Natural killer cell (primary cell): ENCODE measurements at regions of chr21 and their contacts with region 1.

Region 1: GRCh38 chr21:34202553-34203372 is 129.4 kb downstream of the MRPS6 start:
- DNase-seq: no peak
- ATAC-seq: peak in 1 of 3 donors; percentile 32
- H3K4me3 ChIP-seq: peak overlapping the region; percentile 31
- H3K4me3 Mint-ChIP-seq: peak overlapping the region; percentile 92
- H3K27ac ChIP-seq: no peak overlapping the region
- H3K27ac Mint-ChIP-seq: peak overlapping the region in 1 of 2 donors; percentile 85
- H3K4me1 ChIP-seq: peaks cover 45% of the 10 kb centered on the region
- H3K4me1 Mint-ChIP-seq: peaks cover 42 to 49% of the 10 kb centered on the region in 2 donors
- H3K27me3 ChIP-seq: peaks cover 2% of the 10 kb centered on the region
- H3K27me3 Mint-ChIP-seq: peaks cover 0 to 2% of the 10 kb centered on the region in 2 donors
- CTCF ChIP-seq: no peak

Region 2: GRCh38 chr21:33109574-33110339 is 1093.0 kb before region 1 on chr21:
- intact Hi-C with region 1: no loop called
- DNase-seq: peak in 1 of 2 donors; percentile 25
- ATAC-seq: no peak
- H3K4me3 ChIP-seq: no peak overlapping the region
- H3K4me3 Mint-ChIP-seq: no peak overlapping the region
- H3K27ac ChIP-seq: no peak overlapping the region
- H3K27ac Mint-ChIP-seq: no peak overlapping the region
- H3K4me1 ChIP-seq: peaks cover 3% of the 10 kb centered on the region
- H3K4me1 Mint-ChIP-seq: peaks cover 0 to 5% of the 10 kb centered on the region in 2 donors
- H3K27me3 ChIP-seq: peaks cover 22% of the 10 kb centered on the region
- H3K27me3 Mint-ChIP-seq: peaks cover 59 to 87% of the 10 kb centered on the region in 2 donors
- CTCF ChIP-seq: no peak

Region 3: GRCh38 chr21:33229784-33230544 is 972.8 kb before region 1 on chr21 and contains the start of gene IFNAR2:
- intact Hi-C with region 1: no loop called
- DNase-seq: peak; percentile 75 to 84
- ATAC-seq: peak; percentile 75 to 91 (median 82)
- H3K4me3 ChIP-seq: peak within 1 kb of the TSS; percentile 94
- H3K4me3 Mint-ChIP-seq: peak within 1 kb of the TSS; percentile 90
- H3K27ac ChIP-seq: peak within 1 kb of the TSS; percentile 68
- H3K27ac Mint-ChIP-seq: peak within 1 kb of the TSS; percentile 88 to 97
- H3K4me1 ChIP-seq: peaks cover 25% of the 10 kb centered on the region
- H3K4me1 Mint-ChIP-seq: peaks cover 51 to 52% of the 10 kb centered on the region in 2 donors
- H3K27me3 ChIP-seq: no peaks in the 10 kb centered on the region
- H3K27me3 Mint-ChIP-seq: no peaks in the 10 kb centered on the region
- CTCF ChIP-seq: no peak
- total RNA-seq, gene IFNAR2: 65.4 to 105 (median 70.9) TPM

Region 4: GRCh38 chr21:34078915-34079314 is 123.8 kb before region 1 on chr21:
- intact Hi-C with region 1: loop called (anchors 5 kb)
- DNase-seq: peak in 1 of 2 donors; percentile 51
- ATAC-seq: peak; percentile 40 to 62 (median 44)
- H3K4me3 ChIP-seq: no peak overlapping the region
- H3K4me3 Mint-ChIP-seq: peak overlapping the region; percentile 80
- H3K27ac ChIP-seq: no peak overlapping the region
- H3K27ac Mint-ChIP-seq: peak overlapping the region; percentile 54 to 89
- H3K4me1 ChIP-seq: peaks cover 26% of the 10 kb centered on the region
- H3K4me1 Mint-ChIP-seq: peaks cover 94% of the 10 kb centered on the region in 2 donors
- H3K27me3 ChIP-seq: no peaks in the 10 kb centered on the region
- H3K27me3 Mint-ChIP-seq: no peaks in the 10 kb centered on the region
- CTCF ChIP-seq: no peak

Region 5: DNA sequence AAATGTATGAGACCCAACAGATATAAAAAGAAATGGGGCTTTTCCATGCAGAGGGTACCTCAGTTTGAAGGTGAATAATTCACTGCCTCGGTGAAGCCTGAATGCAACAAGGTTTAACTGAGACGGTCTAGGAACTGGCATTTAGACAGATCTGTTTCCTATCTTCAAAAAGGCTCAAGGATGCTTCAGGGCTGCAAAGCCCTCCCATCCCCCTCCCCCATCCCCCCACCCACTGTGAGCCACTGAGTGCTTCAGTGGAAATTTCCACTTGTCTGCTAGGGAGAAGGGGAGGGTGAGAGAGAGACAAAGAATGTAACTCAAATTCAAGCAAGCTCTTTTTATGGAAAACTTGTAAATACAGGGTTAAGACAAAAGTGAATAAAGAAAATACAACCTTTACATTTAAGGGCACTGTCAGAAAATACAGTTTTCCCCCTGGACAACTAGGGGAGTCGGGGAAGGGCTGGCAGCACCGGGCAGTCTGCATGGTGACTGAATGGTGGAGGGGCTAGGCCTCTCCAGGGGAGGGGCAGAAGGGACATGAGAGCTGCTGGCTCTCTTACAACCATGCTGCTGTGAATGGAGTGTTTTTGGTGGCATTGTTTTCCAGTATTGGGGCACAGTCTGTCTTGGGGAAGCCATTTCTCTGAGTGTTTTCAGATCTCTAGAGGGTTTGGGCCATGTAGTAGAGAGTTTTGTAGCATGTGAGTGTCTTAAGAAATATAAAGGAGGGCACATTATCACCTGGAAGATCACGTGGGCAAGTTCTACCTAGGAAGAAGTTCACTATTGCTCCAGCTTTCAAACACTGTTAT is 72.7 kb before region 1 on chr21:
- intact Hi-C with region 1: loop called (anchors 10 kb)
- DNase-seq: no peak
- ATAC-seq: no peak
- H3K4me3 ChIP-seq: no peak overlapping the region
- H3K4me3 Mint-ChIP-seq: peak overlapping the region; percentile 18
- H3K27ac ChIP-seq: no peak overlapping the region
- H3K27ac Mint-ChIP-seq: peak overlapping the region; percentile 73 to 83
- H3K4me1 ChIP-seq: peaks cover 35% of the 10 kb centered on the region
- H3K4me1 Mint-ChIP-seq: peaks cover 86 to 87% of the 10 kb centered on the region in 2 donors
- H3K27me3 ChIP-seq: no peaks in the 10 kb centered on the region
- H3K27me3 Mint-ChIP-seq: no peaks in the 10 kb centered on the region
- CTCF ChIP-seq: no peak